ENCODE measurements at regions of chr5 and their contacts with region 1.

Region 1: GRCh38 chr5:39547553-39548154 is 122.9 kb upstream of the DAB2 start:
- DNase-seq: peak in 4 of 5 donors; percentile 32 to 39 (median 34)
- H3K4me3 ChIP-seq: no peak overlapping the region
- H3K4me3 Mint-ChIP-seq: peak overlapping the region in 7 of 8 donors; percentile 4 to 64 (median 29)
- H3K27ac ChIP-seq: no peak overlapping the region
- H3K27ac Mint-ChIP-seq: no peak overlapping the region
- H3K4me1 ChIP-seq: peaks cover 7% of the 10 kb centered on the region
- H3K4me1 Mint-ChIP-seq: peaks cover 3 to 5% (median 5%) of the 10 kb centered on the region in 4 donors
- H3K27me3 ChIP-seq: no peaks in the 10 kb centered on the region
- H3K27me3 Mint-ChIP-seq: peaks cover 0 to 1% of the 10 kb centered on the region in 2 donors

Region 2: GRCh38 chr5:38994324-38994927 is 553.2 kb before region 1 on chr5:
- CTCF ChIA-PET with region 1: interaction called, 3 read pairs
- POLR2A ChIA-PET with region 1: no interaction called
- intact Hi-C with region 1: loop called (anchors 5 kb)
- DNase-seq: peak; percentile 27 to 45 (median 39)
- H3K4me3 ChIP-seq: no peak overlapping the region
- H3K4me3 Mint-ChIP-seq: no peak overlapping the region
- H3K27ac ChIP-seq: no peak overlapping the region
- H3K27ac Mint-ChIP-seq: peak overlapping the region in 1 of 7 donors; percentile 40
- H3K4me1 ChIP-seq: peaks cover 3% of the 10 kb centered on the region
- H3K4me1 Mint-ChIP-seq: peaks cover 5 to 33% (median 20%) of the 10 kb centered on the region in 4 donors
- H3K27me3 ChIP-seq: no peaks in the 10 kb centered on the region
- H3K27me3 Mint-ChIP-seq: no peaks in the 10 kb centered on the region

Region 3: GRCh38 chr5:39005566-39006232 is 542.0 kb before region 1 on chr5:
- CTCF ChIA-PET with region 1: no interaction called
- POLR2A ChIA-PET with region 1: no interaction called
- intact Hi-C with region 1: loop called (anchors 5 kb)
- DNase-seq: peak in 4 of 5 donors; percentile 16 to 37 (median 23)
- H3K4me3 ChIP-seq: no peak overlapping the region
- H3K4me3 Mint-ChIP-seq: peak overlapping the region in 2 of 8 donors; percentile 5 to 42
- H3K27ac ChIP-seq: no peak overlapping the region
- H3K27ac Mint-ChIP-seq: peak overlapping the region in 5 of 7 donors; percentile 31 to 84 (median 36)
- H3K4me1 ChIP-seq: peaks cover 24% of the 10 kb centered on the region
- H3K4me1 Mint-ChIP-seq: peaks cover 36 to 53% (median 48%) of the 10 kb centered on the region in 4 donors
- H3K27me3 ChIP-seq: no peaks in the 10 kb centered on the region
- H3K27me3 Mint-ChIP-seq: no peaks in the 10 kb centered on the region

Region 4: GRCh38 chr5:39074016-39074886 is 473.4 kb before region 1 on chr5 and contains the start of gene RICTOR:
- CTCF ChIA-PET with region 1: no interaction called
- POLR2A ChIA-PET with region 1: no interaction called
- intact Hi-C with region 1: loop called (anchors 1 kb)
- DNase-seq: peak; percentile 87 to 90 (median 89)
- H3K4me3 ChIP-seq: peak within 1 kb of the TSS; percentile 50 to 56
- H3K4me3 Mint-ChIP-seq: peak within 1 kb of the TSS; percentile 97 to 99 (median 98)
- H3K27ac ChIP-seq: peak within 1 kb of the TSS; percentile 97
- H3K27ac Mint-ChIP-seq: peak within 1 kb of the TSS; percentile 96 to 99 (median 98)
- H3K4me1 ChIP-seq: peaks cover 46% of the 10 kb centered on the region
- H3K4me1 Mint-ChIP-seq: peaks cover 25 to 59% (median 39%) of the 10 kb centered on the region in 4 donors
- H3K27me3 ChIP-seq: peaks cover 22% of the 10 kb centered on the region
- H3K27me3 Mint-ChIP-seq: peaks cover 14 to 18% of the 10 kb centered on the region in 2 donors
- total RNA-seq, gene RICTOR: 85.0 to 94.9 TPM

Region 5: GRCh38 chr5:39148983-39149534 is 398.6 kb before region 1 on chr5:
- CTCF ChIA-PET with region 1: no interaction called
- POLR2A ChIA-PET with region 1: no interaction called
- intact Hi-C with region 1: loop called (anchors 5 kb)
- DNase-seq: peak in 4 of 5 donors; percentile 43 to 59 (median 56)
- H3K4me3 ChIP-seq: no peak overlapping the region
- H3K4me3 Mint-ChIP-seq: peak overlapping the region in 4 of 8 donors; percentile 2 to 36 (median 27)
- H3K27ac ChIP-seq: no peak overlapping the region
- H3K27ac Mint-ChIP-seq: peak overlapping the region; percentile 62 to 94 (median 86)
- H3K4me1 ChIP-seq: peaks cover 84% of the 10 kb centered on the region
- H3K4me1 Mint-ChIP-seq: peaks cover 59 to 87% (median 71%) of the 10 kb centered on the region in 4 donors
- H3K27me3 ChIP-seq: no peaks in the 10 kb centered on the region
- H3K27me3 Mint-ChIP-seq: no peaks in the 10 kb centered on the region

Region 6: GRCh38 chr5:39376293-39376714 is 171.3 kb before region 1 on chr5:
- CTCF ChIA-PET with region 1: interaction called, 28 read pairs
- POLR2A ChIA-PET with region 1: no interaction called
- intact Hi-C with region 1: loop called (anchors 1 kb)
- DNase-seq: peak; percentile 30 to 46 (median 34)
- H3K4me3 ChIP-seq: no peak overlapping the region
- H3K4me3 Mint-ChIP-seq: no peak overlapping the region
- H3K27ac ChIP-seq: no peak overlapping the region
- H3K27ac Mint-ChIP-seq: no peak overlapping the region
- H3K4me1 ChIP-seq: no peaks in the 10 kb centered on the region
- H3K4me1 Mint-ChIP-seq: peaks cover 0 to 8% (median 4%) of the 10 kb centered on the region in 4 donors
- H3K27me3 ChIP-seq: no peaks in the 10 kb centered on the region
- H3K27me3 Mint-ChIP-seq: peaks cover 6 to 15% of the 10 kb centered on the region in 2 donors

Region 7: DNA sequence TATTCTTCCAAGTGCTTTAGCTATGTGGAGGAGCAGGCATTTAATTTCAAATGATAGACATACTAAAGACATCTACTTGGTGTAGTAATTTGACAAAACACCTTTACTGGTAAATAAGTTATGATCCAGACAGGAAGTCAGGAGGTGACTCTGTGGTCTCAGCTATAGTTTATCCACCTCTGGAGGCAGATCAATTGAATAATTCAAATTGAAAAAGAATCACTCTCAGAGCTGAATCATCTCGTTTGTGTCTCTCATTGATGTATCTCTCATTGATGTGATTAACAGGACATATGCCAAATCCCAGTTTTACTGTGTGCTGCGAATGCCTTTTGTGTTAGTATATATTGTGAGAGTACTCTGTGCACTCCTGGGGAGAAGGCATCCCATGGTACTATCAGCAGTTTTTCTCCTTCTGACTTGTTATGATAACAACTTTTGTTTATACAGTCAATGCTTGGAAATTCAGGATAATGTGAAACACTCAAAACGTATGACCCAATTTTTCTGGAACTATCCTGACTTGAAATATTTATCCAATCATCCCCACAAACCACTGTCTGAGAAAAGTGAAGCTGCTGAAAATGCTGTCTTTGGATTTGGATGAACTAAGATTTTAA is 74.4 kb before region 1 on chr5:
- CTCF ChIA-PET with region 1: no interaction called
- POLR2A ChIA-PET with region 1: no interaction called
- intact Hi-C with region 1: no loop called
- DNase-seq: no peak
- H3K4me3 ChIP-seq: no peak overlapping the region
- H3K4me3 Mint-ChIP-seq: no peak overlapping the region
- H3K27ac ChIP-seq: no peak overlapping the region
- H3K27ac Mint-ChIP-seq: no peak overlapping the region
- H3K4me1 ChIP-seq: no peaks in the 10 kb centered on the region
- H3K4me1 Mint-ChIP-seq: no peaks in the 10 kb centered on the region
- H3K27me3 ChIP-seq: no peaks in the 10 kb centered on the region
- H3K27me3 Mint-ChIP-seq: peaks cover 6 to 12% of the 10 kb centered on the region in 2 donors